PC-9 (cell line): ENCODE measurements at regions of chr2 and their contacts with region 1.

Region 1: DNA sequence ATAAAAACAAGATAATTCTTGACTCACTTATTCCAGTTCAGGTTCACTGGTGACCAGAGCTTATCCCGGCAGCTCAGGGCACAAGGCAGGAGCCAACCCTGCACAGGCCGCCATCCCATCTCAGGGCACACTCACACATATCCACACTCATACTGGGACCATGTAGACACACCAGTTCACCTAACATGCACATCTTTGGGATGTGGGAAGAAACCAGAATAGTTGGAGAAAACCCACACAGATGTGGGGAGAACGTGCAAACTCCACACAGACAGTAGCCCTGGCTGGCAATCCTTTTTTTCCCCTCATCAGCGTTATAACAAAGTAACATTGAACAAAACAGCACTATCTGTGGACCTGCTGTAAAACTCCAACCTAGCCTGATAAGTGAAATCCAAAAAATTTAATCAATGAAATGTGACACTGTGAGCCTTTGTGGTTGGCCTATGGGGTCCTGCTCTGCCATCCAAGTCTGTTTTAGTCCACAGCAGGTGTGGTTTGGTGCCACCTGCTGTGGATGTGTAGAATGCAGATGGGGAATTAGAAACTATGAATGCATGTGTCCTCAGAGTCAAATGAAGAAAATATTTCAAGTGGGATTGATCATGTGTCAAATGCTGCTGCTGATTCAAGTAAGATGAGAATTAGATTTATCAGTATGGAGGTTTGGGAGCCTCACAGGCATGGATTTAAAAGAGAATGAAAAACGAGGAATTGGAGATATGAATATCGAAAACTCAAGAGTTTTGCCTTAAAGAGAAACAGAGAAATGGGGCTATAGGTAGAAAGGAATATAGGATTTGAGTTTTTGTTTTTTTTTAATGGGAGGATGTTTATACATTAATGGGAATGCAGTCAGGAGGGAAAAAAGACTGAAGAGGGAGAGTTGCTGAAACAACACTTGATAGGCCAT is 47.0 kb downstream of the UGP2 start:
- DNase-seq: peak in 1 of 2 experiments; percentile 51
- H3K4me3 ChIP-seq: no peak overlapping the region
- H3K27ac ChIP-seq: no peak overlapping the region
- H3K4me1 ChIP-seq: no peaks in the 10 kb centered on the region
- H3K27me3 ChIP-seq: no peaks in the 10 kb centered on the region
- CTCF ChIP-seq: peak; percentile 94

Region 2: GRCh38 chr2:62787386-62787785 is 1101.4 kb before region 1 on chr2:
- CTCF ChIA-PET with region 1: no interaction called
- POLR2A ChIA-PET with region 1: no interaction called
- intact Hi-C with region 1: loop called (anchors 5 kb)
- DNase-seq: peak in 1 of 2 experiments; percentile 38
- H3K4me3 ChIP-seq: no peak overlapping the region
- H3K27ac ChIP-seq: no peak overlapping the region
- H3K4me1 ChIP-seq: no peaks in the 10 kb centered on the region
- H3K27me3 ChIP-seq: no peaks in the 10 kb centered on the region
- CTCF ChIP-seq: peak; percentile 54

Region 3: GRCh38 chr2:63588385-63589147 is 300.2 kb before region 1 on chr2 and contains the starts of genes MDH1 and WDPCP:
- CTCF ChIA-PET with region 1: no interaction called
- POLR2A ChIA-PET with region 1: no interaction called
- intact Hi-C with region 1: loop called (anchors 5 kb)
- DNase-seq: peak; percentile 94 to 100
- H3K4me3 ChIP-seq: peak within 1 kb of the TSS; percentile 63
- H3K27ac ChIP-seq: peak within 1 kb of the TSS; percentile 72
- H3K4me1 ChIP-seq: peaks cover 23% of the 10 kb centered on the region
- H3K27me3 ChIP-seq: no peaks in the 10 kb centered on the region
- CTCF ChIP-seq: no peak
- total RNA-seq, gene MDH1: 157 and 162 TPM in 2 replicates
- total RNA-seq, gene WDPCP: 15.2 and 15.5 TPM in 2 replicates

Region 4: DNA sequence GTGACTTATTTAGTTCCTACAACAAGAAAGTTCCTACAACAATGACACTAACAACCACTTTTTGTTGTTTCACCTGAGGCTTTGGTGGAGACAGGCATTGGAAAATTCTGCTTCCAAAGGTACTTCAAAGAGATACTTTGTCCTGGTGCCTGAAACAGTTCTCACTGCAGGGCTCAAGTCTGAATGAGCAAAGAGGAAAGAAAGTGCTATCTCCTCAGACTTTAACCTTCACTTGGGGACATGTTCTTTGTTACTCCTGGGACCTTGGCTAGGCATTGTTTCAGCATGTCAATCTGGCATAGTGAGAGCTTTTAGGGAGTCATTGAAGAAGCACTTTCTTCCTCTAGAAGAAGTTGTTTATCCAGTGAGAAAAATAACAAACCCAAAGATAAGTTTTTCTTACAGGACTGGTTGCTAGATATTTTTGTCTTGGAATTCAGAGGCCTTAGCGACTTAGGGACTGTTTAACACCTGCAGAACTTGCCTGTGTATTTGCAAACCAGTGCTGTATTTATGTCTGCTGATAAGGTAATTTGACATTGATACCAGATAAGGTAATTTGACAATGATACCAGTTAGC is 287.8 kb before region 1 on chr2:
- CTCF ChIA-PET with region 1: interaction called, 6 read pairs
- POLR2A ChIA-PET with region 1: no interaction called
- intact Hi-C with region 1: loop called (anchors 5 kb)
- DNase-seq: no peak
- H3K4me3 ChIP-seq: no peak overlapping the region
- H3K27ac ChIP-seq: peak overlapping the region; percentile 16; the same call in 1 of the 2 replicates
- H3K4me1 ChIP-seq: no peaks in the 10 kb centered on the region
- H3K27me3 ChIP-seq: no peaks in the 10 kb centered on the region
- CTCF ChIP-seq: no peak

Region 5: DNA sequence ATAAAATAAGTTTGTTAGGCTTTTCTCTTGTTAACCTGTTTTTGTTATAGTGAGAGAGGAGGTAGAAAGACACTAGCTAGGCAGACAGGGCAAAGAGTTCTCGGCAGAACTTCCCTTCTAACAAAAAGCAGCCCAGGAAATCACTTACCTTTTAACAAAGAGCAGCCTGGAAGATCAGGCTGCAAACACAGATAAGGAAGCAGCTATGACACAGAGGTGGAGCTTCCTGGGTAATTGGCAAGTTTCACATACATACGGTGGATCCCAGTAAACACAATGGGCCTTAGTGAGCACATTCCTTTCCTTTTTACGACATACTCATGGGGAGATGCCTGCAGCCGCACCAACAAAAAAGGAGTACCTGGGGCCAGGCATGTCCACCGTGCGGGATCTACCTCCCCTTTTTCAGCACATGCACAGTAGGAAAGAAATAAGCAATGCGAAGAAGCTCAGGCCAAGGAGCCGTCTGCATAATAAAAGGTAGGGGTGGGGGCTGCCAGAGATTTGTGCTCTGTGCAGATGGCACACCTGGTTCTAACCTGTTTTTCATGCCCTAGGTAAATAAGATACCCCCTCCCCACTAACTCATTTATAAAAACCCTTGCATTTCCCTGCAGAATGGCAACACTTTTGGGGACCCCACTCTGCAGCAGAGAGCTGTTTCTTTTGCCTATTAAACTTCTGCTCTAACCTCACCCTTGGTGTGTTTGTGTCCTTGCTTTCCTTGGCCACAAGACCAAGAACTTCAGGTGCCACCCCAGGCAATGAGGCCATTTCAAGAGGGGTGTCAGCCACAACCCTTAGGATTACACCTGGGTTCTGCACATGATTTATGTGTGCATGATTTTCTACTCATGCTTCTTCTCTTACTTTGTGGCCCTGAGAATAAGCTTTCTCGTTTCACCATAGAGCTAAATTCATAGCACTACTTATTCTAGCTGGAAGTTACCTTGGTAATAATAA is 273.5 kb before region 1 on chr2:
- CTCF ChIA-PET with region 1: no interaction called
- POLR2A ChIA-PET with region 1: no interaction called
- intact Hi-C with region 1: loop called (anchors 5 kb)
- DNase-seq: peak; percentile 57 to 91
- H3K4me3 ChIP-seq: peak overlapping the region; percentile 51
- H3K27ac ChIP-seq: peak overlapping the region; percentile 94
- H3K4me1 ChIP-seq: peaks cover 38% of the 10 kb centered on the region
- H3K27me3 ChIP-seq: no peaks in the 10 kb centered on the region
- CTCF ChIP-seq: no peak

Region 6: GRCh38 chr2:63692002-63692606 is 196.6 kb before region 1 on chr2:
- CTCF ChIA-PET with region 1: no interaction called
- POLR2A ChIA-PET with region 1: no interaction called
- intact Hi-C with region 1: loop called (anchors 1 kb)
- DNase-seq: peak; percentile 8 to 41
- H3K4me3 ChIP-seq: no peak overlapping the region
- H3K27ac ChIP-seq: no peak overlapping the region
- H3K4me1 ChIP-seq: peaks cover 9% of the 10 kb centered on the region; the same call in 1 of the 2 replicates
- H3K27me3 ChIP-seq: no peaks in the 10 kb centered on the region
- CTCF ChIP-seq: peak; percentile 85